ENCODE measurements at regions of chr1 and their contacts with region 1.

Region 1: GRCh38 chr1:56831871-56832693 is 12.9 kb upstream of the FYB2 start:
- DNase-seq: peak; percentile 59
- ATAC-seq: peak; percentile 77 to 90

Region 2: DNA sequence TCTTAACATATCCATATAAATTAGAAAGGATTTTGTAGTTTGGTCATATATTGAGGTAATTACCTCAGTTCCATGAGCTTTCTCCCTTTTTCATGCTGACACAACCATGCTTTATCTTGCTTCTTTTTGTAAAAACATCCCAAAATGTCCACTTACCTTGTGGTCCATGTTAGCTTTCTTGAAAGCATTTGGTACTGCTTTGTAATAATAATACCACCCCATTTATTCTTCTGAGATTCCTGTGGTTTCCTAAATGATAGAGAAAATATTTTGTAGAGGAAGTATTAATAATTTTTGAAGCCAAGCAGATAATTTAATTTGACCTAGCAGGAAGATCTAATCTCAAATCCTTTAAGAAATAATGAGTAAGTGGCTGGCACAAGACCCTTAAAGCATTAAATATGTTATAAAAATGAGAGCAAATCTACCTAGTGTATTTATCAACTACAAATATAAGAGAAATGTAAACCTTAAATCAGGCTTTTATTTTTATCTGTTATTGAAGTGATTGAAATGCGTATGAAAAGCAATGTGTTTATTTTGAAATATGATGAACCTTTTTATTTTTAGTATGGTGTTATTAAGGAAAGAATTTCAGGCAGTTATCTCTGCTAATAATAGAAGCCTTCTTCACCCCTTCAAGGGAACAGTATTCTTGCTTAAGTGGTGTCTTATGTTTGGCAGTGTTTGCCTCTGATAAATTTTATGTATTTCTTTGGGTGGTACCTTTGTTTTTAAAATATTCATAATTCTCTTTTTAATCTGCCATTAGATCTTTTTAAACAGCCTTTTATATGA is 177.8 kb before region 1 on chr1:
- intact Hi-C with region 1: no loop called
- DNase-seq: no peak
- ATAC-seq: peak; percentile 58 to 79

Region 3: GRCh38 chr1:57072401-57073110 is 240.5 kb after region 1 on chr1:
- intact Hi-C with region 1: loop called in 1 of 2 experiments (anchors 10 kb)
- DNase-seq: no peak
- ATAC-seq: no peak

Region 4: GRCh38 chr1:57319165-57319564 is 487.1 kb after region 1 on chr1:
- intact Hi-C with region 1: no loop called
- DNase-seq: no peak
- ATAC-seq: no peak

Region 5: GRCh38 chr1:57353654-57354053 is 521.6 kb after region 1 on chr1:
- intact Hi-C with region 1: loop called in 1 of 2 experiments (anchors 10 kb)
- DNase-seq: no peak
- ATAC-seq: no peak

Region 6: GRCh38 chr1:58047265-58047858 is 1215.3 kb after region 1 on chr1:
- intact Hi-C with region 1: loop called in 1 of 2 experiments (anchors 5 kb)
- DNase-seq: no peak
- ATAC-seq: peak in 1 of 2 donors; percentile 54

Region 7: GRCh38 chr1:58155418-58156123 is 1323.5 kb after region 1 on chr1:
- intact Hi-C with region 1: loop called in 1 of 2 experiments (anchors 10 kb)
- DNase-seq: peak; percentile 28
- ATAC-seq: peak; percentile 41 to 77

Measured in left cardiac atrium (tissue), 4 donors.